ENCODE measurements at regions of chr1 and their contacts with region 1.

Region 1: GRCh38 chr1:236862615-236863211 is 67.6 kb downstream of the MTR start:
- DNase-seq: peak; percentile 16
- H3K4me3 Mint-ChIP-seq: no peak overlapping the region
- H3K27ac Mint-ChIP-seq: peak overlapping the region; percentile 24
- H3K4me1 Mint-ChIP-seq: peaks cover 5% of the 10 kb centered on the region
- H3K27me3 Mint-ChIP-seq: no peaks in the 10 kb centered on the region
- CTCF ChIP-seq: no peak

Region 2: GRCh38 chr1:236880209-236880608 is 17.5 kb after region 1 on chr1:
- CTCF ChIA-PET with region 1: interaction called, 10 read pairs
- POLR2A ChIA-PET with region 1: interaction called, 3 read pairs
- intact Hi-C with region 1: no loop called
- DNase-seq: no peak
- H3K4me3 Mint-ChIP-seq: no peak overlapping the region
- H3K27ac Mint-ChIP-seq: no peak overlapping the region
- H3K4me1 Mint-ChIP-seq: no peaks in the 10 kb centered on the region
- H3K27me3 Mint-ChIP-seq: no peaks in the 10 kb centered on the region
- CTCF ChIP-seq: no peak

Region 3: DNA sequence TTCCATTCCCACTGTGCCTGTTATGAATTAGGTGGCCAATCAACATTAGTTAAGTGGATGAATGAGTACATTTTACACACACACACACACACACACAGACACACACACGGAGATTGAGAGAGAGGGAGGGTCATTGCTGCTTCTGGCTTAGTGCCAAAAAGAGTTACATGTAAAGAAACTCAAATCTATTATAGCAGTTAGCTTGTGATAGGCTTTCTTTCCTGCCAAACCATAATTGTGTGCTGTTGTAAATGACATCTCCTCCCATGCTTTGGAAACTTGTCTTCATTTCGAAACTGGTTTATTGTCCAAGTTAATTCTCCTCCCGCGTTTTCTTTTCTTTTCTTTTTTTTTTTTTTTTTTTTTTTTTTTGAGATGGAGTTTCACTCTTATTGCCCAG is 143.0 kb after region 1 on chr1:
- CTCF ChIA-PET with region 1: no interaction called
- POLR2A ChIA-PET with region 1: no interaction called
- intact Hi-C with region 1: no loop called
- DNase-seq: peak; percentile 20
- H3K4me3 Mint-ChIP-seq: no peak overlapping the region
- H3K27ac Mint-ChIP-seq: no peak overlapping the region
- H3K4me1 Mint-ChIP-seq: no peaks in the 10 kb centered on the region
- H3K27me3 Mint-ChIP-seq: peaks cover 38% of the 10 kb centered on the region
- CTCF ChIP-seq: no peak

Region 4: GRCh38 chr1:237042892-237043576 is 180.3 kb after region 1 on chr1:
- CTCF ChIA-PET with region 1: no interaction called
- POLR2A ChIA-PET with region 1: no interaction called
- intact Hi-C with region 1: no loop called
- DNase-seq: no peak
- H3K4me3 Mint-ChIP-seq: no peak overlapping the region
- H3K27ac Mint-ChIP-seq: no peak overlapping the region
- H3K4me1 Mint-ChIP-seq: peaks cover 5% of the 10 kb centered on the region
- H3K27me3 Mint-ChIP-seq: no peaks in the 10 kb centered on the region
- CTCF ChIP-seq: no peak

Region 5: GRCh38 chr1:237171564-237172485 is 309.1 kb after region 1 on chr1:
- CTCF ChIA-PET with region 1: no interaction called
- POLR2A ChIA-PET with region 1: no interaction called
- intact Hi-C with region 1: no loop called
- DNase-seq: no peak
- H3K4me3 Mint-ChIP-seq: no peak overlapping the region
- H3K27ac Mint-ChIP-seq: no peak overlapping the region
- H3K4me1 Mint-ChIP-seq: peaks cover 5% of the 10 kb centered on the region
- H3K27me3 Mint-ChIP-seq: peaks cover 50% of the 10 kb centered on the region
- CTCF ChIP-seq: no peak

Measured in MCF 10A (cell line).